OCI-LY7 (cell line): ENCODE measurements at regions of chr6 and their contacts with region 1.

Region 1: DNA sequence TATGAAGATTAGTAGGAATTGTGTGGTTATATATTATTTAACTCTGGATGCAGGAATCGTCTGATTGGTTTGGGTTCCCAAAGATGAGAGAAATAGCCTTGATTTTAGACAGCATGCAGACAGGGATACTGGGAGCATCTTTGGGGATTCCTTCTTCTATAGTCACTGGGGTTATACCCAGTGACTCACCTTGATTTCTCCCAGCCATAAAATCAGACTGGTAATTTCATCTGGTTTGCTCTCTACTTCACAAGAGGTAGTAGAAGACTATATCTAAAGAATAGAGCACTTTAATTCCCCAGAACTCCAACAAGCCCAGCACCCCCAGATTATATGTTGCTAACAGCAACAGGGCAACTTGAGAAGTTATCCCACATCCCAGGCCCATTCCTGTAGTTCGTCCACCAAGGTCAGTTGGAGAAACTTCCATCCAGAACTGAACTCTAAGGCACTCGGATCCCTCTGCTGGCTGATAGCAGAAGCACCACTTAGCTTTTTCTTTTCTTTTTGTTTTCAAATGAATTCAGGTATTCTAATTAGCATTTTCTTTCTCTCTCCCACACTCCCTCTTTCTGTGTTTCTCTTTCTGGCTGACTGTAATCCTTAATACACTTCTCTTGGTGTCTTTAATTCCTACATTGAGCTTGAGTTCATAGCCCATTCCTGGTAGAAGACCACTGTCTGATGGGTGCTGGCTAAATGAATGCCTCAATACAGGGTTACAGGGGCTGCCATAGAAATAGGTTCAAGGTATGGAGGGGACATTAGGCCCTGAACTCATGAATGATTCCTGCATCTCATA is 20.4 kb upstream of the EFHC1 start:
- DNase-seq: peak; percentile 64
- H3K4me3 ChIP-seq: no peak overlapping the region
- H3K27ac ChIP-seq: no peak overlapping the region
- H3K4me1 ChIP-seq: peaks cover 7% of the 10 kb centered on the region
- CTCF ChIP-seq: peak; percentile 98

Region 2: DNA sequence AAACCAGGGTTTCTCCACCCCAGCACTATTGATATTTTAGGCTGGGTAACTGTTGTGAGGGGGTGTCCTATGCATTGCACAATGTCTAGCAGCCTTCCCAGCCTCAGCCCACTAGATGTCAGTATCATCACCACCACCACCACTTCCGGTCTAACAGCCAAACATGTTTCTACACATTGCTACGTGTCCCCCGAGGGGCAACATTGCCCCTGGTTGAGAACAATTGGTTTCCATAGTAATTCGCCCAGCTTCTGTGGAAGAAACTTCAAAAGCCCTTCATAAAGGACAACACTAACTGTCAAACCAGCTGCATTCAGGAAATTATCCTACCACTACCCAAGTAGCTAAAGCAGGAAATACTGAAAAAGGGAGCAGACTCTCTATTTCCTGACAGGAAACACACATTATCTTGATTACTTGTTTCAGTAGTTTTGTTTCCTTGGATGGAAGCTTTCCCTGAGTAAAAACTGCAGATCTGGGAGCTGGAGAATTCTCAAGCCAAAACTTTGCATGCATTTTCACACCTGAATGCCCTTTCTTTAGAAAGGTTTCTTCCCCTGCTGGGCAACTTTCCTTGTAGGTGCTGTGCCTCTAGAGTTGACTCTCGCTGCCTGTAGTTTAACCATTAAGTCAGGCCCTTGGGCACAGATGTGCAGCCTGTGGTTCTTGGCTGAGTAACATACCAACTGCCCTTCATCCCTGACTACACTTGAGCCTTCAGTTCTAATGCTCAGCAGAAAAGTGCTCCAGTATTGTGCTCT is 335.9 kb before region 1 on chr6:
- CTCF ChIA-PET with region 1: no interaction called
- POLR2A ChIA-PET with region 1: no interaction called
- intact Hi-C with region 1: loop called (anchors 10 kb)
- DNase-seq: peak; percentile 81
- H3K4me3 ChIP-seq: no peak overlapping the region
- H3K27ac ChIP-seq: no peak overlapping the region
- H3K4me1 ChIP-seq: peaks cover 7% of the 10 kb centered on the region
- CTCF ChIP-seq: peak; percentile 91

Region 3: DNA sequence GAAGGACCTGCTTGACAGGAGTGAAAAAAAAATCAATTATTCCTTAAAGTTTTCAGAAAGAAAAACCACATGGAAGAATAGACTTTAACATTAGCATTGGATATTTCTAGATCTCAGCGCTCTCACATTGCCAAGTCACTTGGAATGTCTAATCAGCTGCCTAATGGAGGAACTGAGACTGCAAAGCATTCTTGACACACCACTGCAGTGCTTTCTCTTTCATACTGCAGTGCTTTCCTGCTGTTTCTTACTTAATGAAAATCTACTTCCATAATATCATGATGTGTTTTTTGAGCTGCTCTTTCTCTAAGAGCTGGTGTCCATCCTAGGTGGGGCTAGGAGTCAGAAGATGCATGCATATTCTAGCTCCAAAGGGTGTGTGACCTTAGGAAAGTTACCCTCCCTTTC is 94.7 kb before region 1 on chr6:
- CTCF ChIA-PET with region 1: no interaction called
- POLR2A ChIA-PET with region 1: interaction called, 3 read pairs
- intact Hi-C with region 1: loop called (anchors 5 kb)
- DNase-seq: peak; percentile 59
- H3K4me3 ChIP-seq: peak overlapping the region; percentile 66
- H3K27ac ChIP-seq: peak overlapping the region; percentile 98
- H3K4me1 ChIP-seq: peaks cover 64% of the 10 kb centered on the region
- CTCF ChIP-seq: no peak

Region 4: DNA sequence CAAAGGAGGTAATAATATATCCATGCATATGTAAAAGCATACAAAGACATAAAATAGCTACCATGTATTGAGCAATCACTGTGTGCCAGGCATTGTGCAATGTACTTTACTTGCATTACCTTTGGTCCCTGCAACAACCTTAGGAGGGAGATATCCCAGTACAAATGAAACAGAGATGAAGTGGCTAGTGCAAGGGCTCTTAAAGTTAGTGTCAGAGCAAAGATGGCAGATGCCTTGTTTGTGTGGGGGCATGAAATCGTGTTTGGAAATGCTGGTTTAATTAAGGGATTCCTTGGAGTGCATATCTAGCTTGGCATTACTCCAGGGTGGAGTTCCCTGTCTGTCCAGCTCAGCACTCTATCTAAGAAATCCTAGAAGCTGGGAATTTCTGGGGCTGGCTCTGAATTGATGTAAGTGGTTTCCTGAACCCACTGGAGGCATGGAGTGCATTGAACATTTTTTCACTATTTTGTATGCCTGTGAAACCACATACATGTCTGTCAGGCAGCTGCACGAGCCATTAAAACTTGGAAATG is 28.0 kb before region 1 on chr6:
- CTCF ChIA-PET with region 1: no interaction called
- POLR2A ChIA-PET with region 1: no interaction called
- intact Hi-C with region 1: no loop called
- DNase-seq: no peak
- H3K4me3 ChIP-seq: no peak overlapping the region
- H3K27ac ChIP-seq: no peak overlapping the region
- H3K4me1 ChIP-seq: peaks cover 8% of the 10 kb centered on the region
- CTCF ChIP-seq: no peak

Region 5: DNA sequence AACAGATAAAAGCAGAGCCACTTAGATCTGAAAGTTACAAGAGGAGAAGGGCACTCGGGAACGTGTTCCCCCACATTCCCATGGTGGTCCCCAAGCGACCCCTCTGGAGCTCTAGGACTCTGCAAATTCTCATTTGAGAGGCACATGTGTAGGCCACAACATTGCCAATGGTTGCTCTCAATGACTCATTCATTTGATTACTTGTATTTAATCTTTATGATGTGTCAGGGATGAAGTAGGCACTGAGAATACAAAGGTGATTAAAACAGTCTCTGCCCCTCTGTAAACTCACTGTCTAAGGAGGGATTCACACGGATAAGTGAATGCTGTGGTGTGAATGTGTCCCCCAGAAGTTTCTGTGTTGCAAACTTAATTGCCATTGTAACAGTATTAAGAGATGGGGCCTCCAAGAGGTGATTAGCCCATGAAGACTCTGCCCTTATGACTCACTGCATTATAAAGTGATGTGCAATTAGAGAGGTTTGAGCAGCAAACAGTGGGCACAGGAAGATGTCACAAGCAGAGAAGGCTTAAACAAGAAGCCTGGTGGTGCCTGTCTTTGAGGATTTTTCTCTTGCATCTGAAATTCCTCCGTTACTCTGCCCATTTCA is 211.1 kb after region 1 on chr6:
- CTCF ChIA-PET with region 1: no interaction called
- POLR2A ChIA-PET with region 1: no interaction called
- intact Hi-C with region 1: no loop called
- DNase-seq: no peak
- H3K4me3 ChIP-seq: no peak overlapping the region
- H3K27ac ChIP-seq: no peak overlapping the region
- H3K4me1 ChIP-seq: no peaks in the 10 kb centered on the region
- CTCF ChIP-seq: no peak